CD4-positive, alpha-beta memory T cell (primary cell): ENCODE measurements at regions of chr16 and their contacts with region 1.

Region 1: DNA sequence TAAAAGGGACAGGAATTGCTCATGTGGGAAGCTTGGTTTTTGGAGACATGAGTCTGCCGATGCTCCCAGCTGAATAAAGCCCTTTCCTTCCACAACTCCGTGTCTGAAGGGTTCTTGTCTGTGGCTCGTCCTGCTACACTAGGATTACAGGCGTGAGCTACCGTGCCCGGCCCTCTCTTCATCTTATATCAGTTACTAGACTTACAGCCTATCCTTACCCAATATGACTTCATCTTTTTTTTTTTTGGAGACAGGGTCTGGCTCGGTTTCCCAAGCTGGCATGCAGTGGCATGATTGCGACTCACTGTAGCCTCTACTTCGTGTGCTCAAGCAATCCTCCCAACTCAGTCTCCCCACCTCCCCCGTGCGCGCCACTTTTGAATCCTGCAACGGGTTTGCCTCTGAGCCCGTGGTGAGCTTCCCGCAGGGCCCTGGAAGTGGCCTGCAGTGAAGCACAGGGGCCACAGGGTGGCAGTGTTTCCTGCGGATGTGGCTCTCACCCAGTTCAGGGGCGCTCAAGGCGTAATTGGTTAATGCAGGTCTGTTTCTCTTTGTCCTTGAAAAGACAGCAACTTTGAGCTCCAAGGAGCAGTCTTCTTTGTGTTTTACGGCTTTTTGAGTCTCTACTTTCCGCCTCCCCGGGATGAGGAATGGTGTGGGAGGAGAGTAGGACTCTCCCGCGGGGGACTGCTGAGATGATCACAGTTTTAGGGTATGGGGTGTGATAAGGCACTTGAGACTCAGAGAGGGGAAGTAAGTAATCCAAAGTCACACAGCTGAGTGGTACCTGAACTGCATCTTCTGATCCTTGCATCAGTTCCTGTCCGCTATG is 22.7 kb upstream of the GPRC5B start:
- DNase-seq: peak; percentile 59 to 68 (median 66)
- H3K4me3 ChIP-seq: no peak overlapping the region
- H3K4me3 Mint-ChIP-seq: peak overlapping the region; percentile 24 to 77 (median 70)
- H3K27ac ChIP-seq: no peak overlapping the region
- H3K27ac Mint-ChIP-seq: peak overlapping the region in 3 of 7 donors; percentile 5 to 64 (median 57)
- H3K4me1 ChIP-seq: peaks cover 7% of the 10 kb centered on the region
- H3K4me1 Mint-ChIP-seq: peaks cover 8 to 10% (median 8%) of the 10 kb centered on the region in 4 donors
- H3K27me3 ChIP-seq: no peaks in the 10 kb centered on the region
- H3K27me3 Mint-ChIP-seq: peaks cover 6 to 12% of the 10 kb centered on the region in 2 donors

Region 2: DNA sequence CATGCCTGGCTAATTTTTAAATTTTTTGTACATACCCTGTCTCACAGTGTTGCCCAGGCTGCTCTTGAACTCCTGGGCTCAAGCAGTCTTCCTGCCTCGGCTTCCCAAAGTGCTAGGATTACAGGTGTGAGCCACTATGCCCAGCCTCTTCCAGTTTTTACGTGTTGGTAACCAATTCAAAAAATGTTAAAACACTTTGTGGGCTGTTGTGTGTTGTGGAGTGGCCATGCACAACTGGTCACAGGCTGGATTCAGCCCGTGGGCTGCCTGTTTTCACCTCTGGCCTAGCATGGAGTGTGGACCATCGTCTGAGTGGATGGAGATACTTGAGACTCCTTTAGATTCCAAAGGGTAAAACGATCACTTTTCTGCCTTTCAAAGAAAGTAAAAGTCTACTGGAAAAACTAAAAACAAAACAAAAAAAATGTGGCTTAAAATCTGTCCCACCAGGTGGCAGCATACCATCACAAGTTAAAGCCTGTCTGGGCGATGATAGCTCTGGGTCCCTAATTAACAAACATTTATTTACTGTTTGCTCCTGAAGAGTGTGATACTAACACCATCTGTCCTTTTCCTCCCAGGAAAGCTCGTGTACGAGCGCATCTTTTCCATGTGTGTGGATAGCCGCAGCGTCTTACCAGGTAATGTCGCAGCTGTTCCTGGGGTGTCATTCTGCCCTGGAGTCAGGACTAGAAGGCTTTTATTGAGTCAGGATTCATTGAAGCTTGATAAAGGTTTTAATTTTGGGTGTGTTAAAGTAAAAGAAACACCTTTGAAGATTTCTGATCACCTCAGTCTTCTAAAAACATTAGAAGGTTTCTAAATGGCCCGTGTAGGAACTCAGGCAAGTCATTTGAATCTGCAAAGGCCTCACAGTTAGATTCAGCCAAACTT is 306.0 kb before region 1 on chr16:
- CTCF ChIA-PET with region 1: interaction called, 11 read pairs
- POLR2A ChIA-PET with region 1: no interaction called
- intact Hi-C with region 1: no loop called
- DNase-seq: peak; percentile 39 to 51 (median 43)
- H3K4me3 ChIP-seq: no peak overlapping the region
- H3K4me3 Mint-ChIP-seq: no peak overlapping the region
- H3K27ac ChIP-seq: no peak overlapping the region
- H3K27ac Mint-ChIP-seq: peak overlapping the region in 2 of 7 donors; percentile 15 to 71
- H3K4me1 ChIP-seq: no peaks in the 10 kb centered on the region
- H3K4me1 Mint-ChIP-seq: no peaks in the 10 kb centered on the region
- H3K27me3 ChIP-seq: no peaks in the 10 kb centered on the region
- H3K27me3 Mint-ChIP-seq: no peaks in the 10 kb centered on the region

Region 3: GRCh38 chr16:19613834-19614233 is 293.5 kb before region 1 on chr16:
- CTCF ChIA-PET with region 1: interaction called, 10 read pairs
- POLR2A ChIA-PET with region 1: no interaction called
- intact Hi-C with region 1: no loop called
- DNase-seq: no peak
- H3K4me3 ChIP-seq: no peak overlapping the region
- H3K4me3 Mint-ChIP-seq: no peak overlapping the region
- H3K27ac ChIP-seq: no peak overlapping the region
- H3K27ac Mint-ChIP-seq: no peak overlapping the region
- H3K4me1 ChIP-seq: no peaks in the 10 kb centered on the region
- H3K4me1 Mint-ChIP-seq: no peaks in the 10 kb centered on the region
- H3K27me3 ChIP-seq: no peaks in the 10 kb centered on the region
- H3K27me3 Mint-ChIP-seq: no peaks in the 10 kb centered on the region

Region 4: DNA sequence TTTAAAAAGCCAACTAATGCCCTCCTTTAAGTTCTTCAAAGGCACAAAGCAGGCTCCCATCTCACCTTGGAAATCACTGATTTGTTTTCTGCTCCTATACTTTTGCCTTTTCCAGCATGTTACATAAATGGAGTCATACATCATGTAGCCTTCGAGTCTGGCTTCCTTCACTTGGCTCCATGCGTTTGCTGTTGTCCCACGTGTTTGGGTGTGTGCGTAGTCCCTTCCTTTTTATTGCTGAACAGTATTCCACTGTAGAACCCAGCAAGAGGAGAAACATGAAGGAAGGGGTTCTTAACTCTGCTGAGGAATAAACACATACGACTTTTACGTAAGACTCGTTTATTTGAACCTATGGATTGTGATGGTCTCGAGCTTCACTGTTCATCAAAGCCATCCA is 104.8 kb before region 1 on chr16:
- CTCF ChIA-PET with region 1: no interaction called
- POLR2A ChIA-PET with region 1: no interaction called
- intact Hi-C with region 1: no loop called
- DNase-seq: no peak
- H3K4me3 ChIP-seq: no peak overlapping the region
- H3K4me3 Mint-ChIP-seq: no peak overlapping the region
- H3K27ac ChIP-seq: no peak overlapping the region
- H3K27ac Mint-ChIP-seq: no peak overlapping the region
- H3K4me1 ChIP-seq: peaks cover 15% of the 10 kb centered on the region
- H3K4me1 Mint-ChIP-seq: peaks cover 12 to 18% (median 16%) of the 10 kb centered on the region in 4 donors
- H3K27me3 ChIP-seq: no peaks in the 10 kb centered on the region
- H3K27me3 Mint-ChIP-seq: no peaks in the 10 kb centered on the region

Region 5: GRCh38 chr16:19886073-19886941 is 21.1 kb before region 1 on chr16:
- CTCF ChIA-PET with region 1: interaction called, 12 read pairs
- POLR2A ChIA-PET with region 1: interaction called, 3 read pairs
- intact Hi-C with region 1: no loop called
- DNase-seq: peak; percentile 76 to 79 (median 76)
- H3K4me3 ChIP-seq: peak overlapping the region in 1 of 2 donors; percentile 9
- H3K4me3 Mint-ChIP-seq: peak overlapping the region; percentile 79 to 91 (median 86)
- H3K27ac ChIP-seq: no peak overlapping the region
- H3K27ac Mint-ChIP-seq: peak overlapping the region in 3 of 7 donors; percentile 60 to 89 (median 67)
- H3K4me1 ChIP-seq: peaks cover 24% of the 10 kb centered on the region
- H3K4me1 Mint-ChIP-seq: peaks cover 15 to 30% (median 23%) of the 10 kb centered on the region in 4 donors
- H3K27me3 ChIP-seq: peaks cover 12% of the 10 kb centered on the region
- H3K27me3 Mint-ChIP-seq: peaks cover 7 to 27% of the 10 kb centered on the region in 2 donors

Region 6: DNA sequence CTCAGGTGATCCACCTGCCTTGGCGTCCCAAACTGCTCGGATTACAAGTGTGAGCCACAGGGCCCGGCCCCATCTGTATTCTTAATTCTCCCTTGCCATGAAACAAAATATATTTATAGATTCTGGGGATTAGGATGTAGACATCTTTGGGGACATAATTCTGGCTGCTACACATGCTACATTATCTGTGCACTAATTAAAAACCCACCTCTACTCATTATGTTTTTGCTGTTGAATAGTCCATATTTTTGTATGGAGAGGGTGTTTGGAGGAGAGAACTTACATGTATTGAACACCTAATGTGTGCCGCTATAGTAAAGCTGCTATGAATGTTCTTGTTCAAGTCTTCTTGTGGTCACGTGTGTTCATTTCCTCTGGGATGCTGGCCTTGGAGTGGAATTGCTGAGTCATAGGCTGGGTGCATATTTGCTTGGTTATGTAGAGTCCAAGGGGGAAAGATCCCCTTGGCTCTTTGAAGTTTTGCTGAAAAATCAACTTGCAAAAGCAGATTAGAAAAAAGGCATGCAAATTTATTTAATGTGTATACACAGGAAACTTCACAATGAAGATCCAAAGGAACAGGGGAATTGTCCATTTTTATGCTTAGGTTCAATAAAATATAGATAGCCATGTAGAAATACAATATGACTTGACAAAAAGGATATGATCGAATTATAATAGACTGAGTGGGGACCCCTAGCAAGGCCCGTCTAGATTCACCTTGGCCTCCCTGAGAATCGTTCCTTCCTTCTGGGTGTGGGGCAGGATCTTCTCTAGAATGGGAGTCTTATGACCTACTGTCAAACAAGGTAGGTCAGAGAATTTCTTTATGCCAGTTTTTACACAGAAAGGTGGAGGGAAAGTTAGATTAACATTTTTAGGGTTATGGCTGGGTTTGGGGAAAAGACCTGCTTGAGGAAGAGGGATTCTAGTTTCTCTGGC is 19.3 kb after region 1 on chr16:
- CTCF ChIA-PET with region 1: interaction called, 10 read pairs
- POLR2A ChIA-PET with region 1: no interaction called
- intact Hi-C with region 1: no loop called
- DNase-seq: no peak
- H3K4me3 ChIP-seq: no peak overlapping the region
- H3K4me3 Mint-ChIP-seq: no peak overlapping the region
- H3K27ac ChIP-seq: no peak overlapping the region
- H3K27ac Mint-ChIP-seq: no peak overlapping the region
- H3K4me1 ChIP-seq: no peaks in the 10 kb centered on the region
- H3K4me1 Mint-ChIP-seq: no peaks in the 10 kb centered on the region
- H3K27me3 ChIP-seq: no peaks in the 10 kb centered on the region
- H3K27me3 Mint-ChIP-seq: peaks cover 4 to 23% of the 10 kb centered on the region in 2 donors

Region 7: GRCh38 chr16:20300312-20301097 is 393.1 kb after region 1 on chr16:
- CTCF ChIA-PET with region 1: interaction called, 25 read pairs
- POLR2A ChIA-PET with region 1: no interaction called
- intact Hi-C with region 1: loop called (anchors 5 kb)
- DNase-seq: peak in 4 of 5 donors; percentile 1 to 4 (median 2)
- H3K4me3 ChIP-seq: no peak overlapping the region
- H3K4me3 Mint-ChIP-seq: no peak overlapping the region
- H3K27ac ChIP-seq: no peak overlapping the region
- H3K27ac Mint-ChIP-seq: no peak overlapping the region
- H3K4me1 ChIP-seq: no peaks in the 10 kb centered on the region
- H3K4me1 Mint-ChIP-seq: peaks cover 0 to 4% (median 1%) of the 10 kb centered on the region in 4 donors
- H3K27me3 ChIP-seq: no peaks in the 10 kb centered on the region
- H3K27me3 Mint-ChIP-seq: peaks cover 4 to 6% of the 10 kb centered on the region in 2 donors

Region 8: GRCh38 chr16:20383106-20384029 is 476.0 kb after region 1 on chr16:
- CTCF ChIA-PET with region 1: interaction called, 60 read pairs
- POLR2A ChIA-PET with region 1: no interaction called
- intact Hi-C with region 1: loop called (anchors 1 kb)
- DNase-seq: peak in 4 of 5 donors; percentile 23 to 40 (median 30)
- H3K4me3 ChIP-seq: no peak overlapping the region
- H3K4me3 Mint-ChIP-seq: no peak overlapping the region
- H3K27ac ChIP-seq: no peak overlapping the region
- H3K27ac Mint-ChIP-seq: no peak overlapping the region
- H3K4me1 ChIP-seq: no peaks in the 10 kb centered on the region
- H3K4me1 Mint-ChIP-seq: peaks cover 0 to 4% (median 2%) of the 10 kb centered on the region in 4 donors
- H3K27me3 ChIP-seq: no peaks in the 10 kb centered on the region
- H3K27me3 Mint-ChIP-seq: peaks cover 10 to 12% of the 10 kb centered on the region in 2 donors